AG04449 (cell line): ENCODE measurements at regions of chr3 and their contacts with region 1.

Region 1: DNA sequence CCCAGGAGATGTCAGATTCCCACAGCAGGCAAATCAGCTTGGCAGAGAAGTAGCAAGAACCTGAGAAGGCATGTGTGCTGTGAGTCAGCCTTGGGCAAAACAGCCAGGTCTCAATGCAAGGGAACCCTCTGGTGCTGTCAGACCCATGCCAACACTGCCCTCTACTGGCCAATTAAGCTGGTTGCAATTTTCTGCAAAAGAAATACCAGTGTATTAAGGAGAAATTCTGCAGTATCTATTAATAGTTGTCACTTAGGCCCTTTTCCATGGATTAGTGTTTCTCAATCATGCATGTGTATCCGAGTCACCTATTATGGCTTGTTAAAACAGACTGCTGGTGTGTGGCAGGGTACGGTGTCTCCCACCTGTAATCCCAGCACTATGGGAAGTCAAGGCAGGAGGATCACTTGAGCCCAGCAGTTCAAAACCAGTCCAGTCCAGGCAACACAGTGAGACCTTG is 26.2 kb downstream of the MAP4 start:
- DNase-seq: peak; percentile 79
- H3K4me3 ChIP-seq: no peak overlapping the region
- CTCF ChIP-seq: peak; percentile 78

Region 2: GRCh38 chr3:47836986-47837385 is 153.0 kb before region 1 on chr3:
- CTCF ChIA-PET with region 1: interaction called, 28 read pairs
- POLR2A ChIA-PET with region 1: no interaction called
- DNase-seq: no peak
- H3K4me3 ChIP-seq: no peak overlapping the region
- CTCF ChIP-seq: no peak

Region 3: DNA sequence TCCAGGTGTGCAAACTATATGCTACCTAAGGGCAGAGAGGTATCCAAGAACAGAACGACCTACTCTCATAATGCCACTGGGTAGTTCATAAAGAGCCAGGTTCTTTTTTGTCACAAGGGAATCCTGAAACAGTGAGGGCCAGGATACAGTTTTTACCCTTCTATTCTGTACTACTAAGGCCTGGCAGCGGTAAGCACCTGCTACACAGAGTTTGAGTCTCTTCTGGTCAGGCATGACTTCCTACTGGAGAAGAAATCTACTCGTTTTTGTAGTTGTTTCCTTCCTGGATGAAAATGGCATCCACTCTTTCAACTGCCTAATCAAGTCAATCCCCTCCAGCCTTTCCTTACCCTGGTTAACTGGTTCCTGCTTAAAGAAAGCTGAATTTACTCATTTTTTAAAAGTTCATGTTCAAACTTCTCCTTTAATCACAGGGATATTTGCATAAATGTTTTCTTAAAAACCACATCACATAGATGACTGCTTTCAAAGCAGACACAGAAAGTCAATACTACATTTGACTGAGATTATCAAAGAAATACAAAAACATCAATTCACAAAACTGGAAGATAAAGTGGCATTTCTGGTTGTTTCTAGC is 13.8 kb before region 1 on chr3:
- CTCF ChIA-PET with region 1: interaction called, 55 read pairs
- POLR2A ChIA-PET with region 1: no interaction called
- DNase-seq: no peak
- H3K4me3 ChIP-seq: no peak overlapping the region
- CTCF ChIP-seq: no peak

Region 4: GRCh38 chr3:48001991-48002390 is 12.0 kb after region 1 on chr3:
- CTCF ChIA-PET with region 1: interaction called, 53 read pairs
- POLR2A ChIA-PET with region 1: no interaction called
- DNase-seq: no peak
- H3K4me3 ChIP-seq: no peak overlapping the region
- CTCF ChIP-seq: no peak

Region 5: GRCh38 chr3:48013288-48013980 is 23.4 kb after region 1 on chr3:
- CTCF ChIA-PET with region 1: interaction called, 24 read pairs
- POLR2A ChIA-PET with region 1: no interaction called
- DNase-seq: no peak
- H3K4me3 ChIP-seq: no peak overlapping the region
- CTCF ChIP-seq: no peak

Region 6: DNA sequence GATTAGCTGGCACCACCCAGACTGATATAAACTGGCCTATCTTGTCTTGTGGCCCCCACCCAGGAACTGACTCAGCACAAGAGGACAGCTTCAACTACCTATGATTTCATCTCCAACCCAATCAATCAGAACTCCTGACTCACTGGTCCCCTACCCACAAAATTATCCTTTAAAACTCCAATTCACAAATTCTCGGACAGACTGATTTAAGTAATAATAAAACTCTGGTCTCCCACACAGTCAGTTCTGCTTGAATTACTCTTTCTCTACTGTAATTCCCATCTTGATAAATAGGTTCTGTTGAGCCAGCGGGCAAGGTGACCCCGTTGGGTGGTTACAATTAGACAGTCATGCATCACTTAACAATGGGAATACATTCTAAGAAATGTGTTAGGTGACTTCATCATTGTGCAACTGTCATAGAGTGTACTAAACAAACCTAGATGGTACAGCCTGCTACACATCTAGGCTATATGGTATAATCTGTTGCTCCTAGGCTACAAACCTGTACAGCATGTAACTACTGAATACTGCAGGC is 74.3 kb after region 1 on chr3:
- CTCF ChIA-PET with region 1: no interaction called
- POLR2A ChIA-PET with region 1: no interaction called
- DNase-seq: no peak
- H3K4me3 ChIP-seq: no peak overlapping the region
- CTCF ChIP-seq: no peak